ENCODE measurements at regions of chr4 and their contacts with region 1.

Region 1: DNA sequence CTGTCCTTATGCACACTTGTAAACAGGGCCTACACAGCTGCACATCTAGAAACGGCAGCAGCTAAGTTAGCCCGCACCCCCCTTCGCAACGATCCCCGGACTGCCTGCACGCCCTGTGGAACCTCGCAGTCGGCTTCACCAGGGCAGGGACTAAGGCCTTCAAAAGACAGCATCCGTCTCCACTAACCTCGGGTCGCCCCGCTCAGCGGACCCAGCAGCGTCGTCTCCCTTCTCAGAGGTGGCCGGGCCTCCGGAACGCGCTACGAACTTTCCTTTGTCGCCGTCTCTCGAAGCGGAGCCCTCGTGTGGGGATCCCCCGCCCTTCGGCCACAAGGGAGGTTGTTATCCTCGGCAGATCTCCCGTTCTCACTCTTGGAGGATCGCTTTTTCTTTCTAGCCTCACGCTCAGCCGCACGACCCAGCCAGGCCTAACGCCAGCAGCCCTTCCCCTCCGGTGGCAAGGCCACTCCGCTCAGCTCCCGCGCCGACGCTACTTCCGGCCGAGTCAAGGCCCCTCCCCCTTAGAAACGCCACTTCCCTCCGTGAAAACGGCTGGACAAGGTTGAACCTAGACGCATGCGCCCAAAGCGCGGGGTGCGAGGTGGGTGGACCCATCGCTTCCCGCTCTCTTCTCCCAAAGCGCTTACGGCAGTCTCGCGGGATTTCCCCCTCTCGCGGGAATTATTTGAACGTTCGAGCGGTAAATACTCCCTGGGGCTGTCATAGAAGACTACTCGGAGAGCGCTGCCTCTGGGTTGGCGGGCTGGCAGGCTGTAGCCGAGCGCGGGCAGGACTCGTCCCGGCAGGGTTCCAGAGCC is at the starts of genes DCAF16 and NCAPG:
- DNase-seq: peak; percentile 99 to 100 (median 100)

Region 2: DNA sequence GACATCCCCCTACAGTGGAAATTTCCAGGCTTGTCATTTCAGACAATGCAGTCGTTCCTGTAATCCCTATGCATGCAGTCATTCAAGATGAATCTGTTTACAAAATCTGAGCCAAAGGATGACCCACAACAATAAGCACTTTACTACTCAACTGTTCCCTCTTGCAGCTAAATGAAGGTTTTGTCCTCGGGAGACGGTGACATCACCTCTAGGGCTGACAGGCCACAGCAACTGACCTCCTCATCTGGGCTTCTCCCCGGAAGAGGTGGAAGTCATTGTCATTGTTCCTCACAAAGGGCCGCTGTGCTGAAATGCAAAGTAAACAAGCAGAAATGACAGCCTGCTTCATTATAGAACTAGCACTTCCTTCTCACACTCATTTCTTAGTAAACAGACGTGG is 266.3 kb before region 1 on chr4:
- intact Hi-C with region 1: loop called (anchors 5 kb)
- DNase-seq: peak; percentile 41 to 98 (median 78)

Region 3: DNA sequence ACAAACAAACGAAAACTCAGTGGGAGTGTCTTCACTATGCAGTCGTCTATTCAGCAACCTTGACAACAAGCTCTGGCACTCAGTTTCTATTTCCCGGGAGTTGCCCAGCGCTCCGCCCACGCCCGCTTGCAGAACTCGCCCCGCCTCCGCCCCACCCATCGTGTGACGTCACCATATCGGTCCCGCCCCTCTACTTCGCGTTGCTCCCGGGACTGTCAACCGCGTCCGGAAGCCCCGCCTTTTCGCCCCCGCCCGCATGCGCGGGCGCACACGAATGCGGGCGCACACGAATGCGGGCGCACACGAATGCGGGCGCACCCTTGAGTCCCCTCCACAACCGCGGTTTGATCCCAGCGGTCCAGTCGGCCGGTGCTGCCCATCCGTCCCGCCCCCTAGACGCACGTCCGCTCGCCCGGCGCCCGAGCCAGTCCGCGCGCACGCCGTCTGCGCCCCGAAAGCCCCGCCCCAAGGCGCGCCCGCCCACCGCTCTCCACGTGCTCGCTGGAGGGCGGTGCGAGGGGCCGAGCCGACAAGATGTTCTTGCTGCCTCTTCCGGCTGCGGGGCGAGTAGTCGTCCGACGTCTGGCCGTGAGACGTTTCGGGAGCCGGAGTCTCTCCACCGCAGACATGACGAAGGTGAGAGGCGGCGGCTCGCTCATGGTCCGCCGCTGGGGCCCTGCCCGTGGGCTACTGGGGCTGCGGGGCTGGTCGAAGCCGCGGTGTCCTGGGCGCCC is 233.4 kb before region 1 on chr4 and contains the start of gene LAP3:
- intact Hi-C with region 1: loop called (anchors 10 kb)
- DNase-seq: peak; percentile 97 to 100 (median 99)

Region 4: GRCh38 chr4:17636696-17637622 is 173.5 kb before region 1 on chr4:
- intact Hi-C with region 1: loop called (anchors 10 kb)
- DNase-seq: peak; percentile 58 to 97 (median 86)

Region 5: GRCh38 chr4:18021722-18022571 is 211.5 kb after region 1 on chr4 and contains the start of gene LCORL:
- intact Hi-C with region 1: loop called (anchors 5 kb)
- DNase-seq: peak; percentile 82 to 99 (median 92)

Measured in posterior cingulate gyrus (tissue), 11 donors.